Colonic mucosa (tissue), 4 donors: ENCODE measurements at regions of chr16 and their contacts with region 1.

Region 1: GRCh38 chr16:53773150-53773846 is 69.3 kb downstream of the FTO start:
- DNase-seq: peak; percentile 68
- H3K4me3 ChIP-seq: no peak overlapping the region
- H3K27ac ChIP-seq: no peak overlapping the region
- H3K4me1 ChIP-seq: peaks cover 7% of the 10 kb centered on the region
- H3K27me3 ChIP-seq: no peaks in the 10 kb centered on the region
- CTCF ChIP-seq: peak; percentile 50

Region 2: DNA sequence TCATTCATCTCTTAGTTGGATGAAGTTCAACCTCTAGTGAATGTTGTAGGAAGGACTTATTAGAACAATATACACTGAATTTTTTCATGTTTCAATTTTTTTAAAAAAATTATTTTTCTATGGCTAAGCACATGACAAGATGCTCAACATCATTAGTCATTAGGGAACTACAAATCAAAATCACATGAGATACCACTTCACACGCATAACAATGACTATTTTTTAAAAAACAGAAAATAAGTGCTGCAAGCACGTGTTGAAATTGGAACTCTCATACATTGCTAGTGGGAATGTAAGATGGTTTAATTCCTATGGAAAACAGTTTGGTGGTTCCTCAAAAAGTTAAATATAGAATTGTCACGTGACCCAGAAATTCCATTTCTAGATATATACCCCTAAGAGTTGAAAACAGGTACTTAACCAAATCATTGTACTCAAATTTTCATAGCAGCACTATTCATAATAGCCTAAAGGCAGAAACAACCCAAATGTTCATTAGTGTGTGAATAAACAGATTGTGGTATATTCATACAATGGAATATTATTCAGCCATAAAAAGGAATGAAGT is 185.1 kb before region 1 on chr16:
- intact Hi-C with region 1: no loop called
- DNase-seq: no peak
- H3K4me3 ChIP-seq: no peak overlapping the region
- H3K27ac ChIP-seq: no peak overlapping the region
- H3K4me1 ChIP-seq: no peaks in the 10 kb centered on the region
- H3K27me3 ChIP-seq: no peaks in the 10 kb centered on the region
- CTCF ChIP-seq: no peak

Region 3: DNA sequence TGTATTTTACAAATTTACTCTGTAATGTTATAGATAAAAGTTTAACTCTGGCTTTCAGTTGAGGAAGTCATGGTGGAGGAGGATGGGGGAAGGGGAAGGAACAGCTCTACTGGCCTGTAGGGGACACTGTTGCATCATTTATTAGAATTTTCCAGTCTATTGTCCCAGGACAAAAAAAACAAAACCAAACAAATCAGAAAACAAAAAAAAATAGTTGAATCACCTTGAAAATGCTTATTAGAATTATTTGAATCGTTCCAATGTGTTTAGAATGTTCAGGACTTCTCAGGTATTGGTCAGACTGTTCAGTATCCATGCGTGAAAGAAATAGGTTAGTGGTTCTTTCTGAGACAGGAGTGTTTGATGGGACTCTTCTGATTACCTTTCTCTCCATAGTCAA is 172.7 kb after region 1 on chr16:
- intact Hi-C with region 1: loop called (anchors 10 kb)
- DNase-seq: no peak
- H3K4me3 ChIP-seq: no peak overlapping the region
- H3K27ac ChIP-seq: no peak overlapping the region
- H3K4me1 ChIP-seq: peaks cover 9% of the 10 kb centered on the region
- H3K27me3 ChIP-seq: no peaks in the 10 kb centered on the region
- CTCF ChIP-seq: peak; percentile 56